GM12878 (cell line): ENCODE measurements at regions of chr7 and their contacts with region 1.

Region 1: GRCh38 chr7:130069978-130070860 is at the start of gene KLHDC10:
- DNase-seq: peak; percentile 97
- ATAC-seq: peak; percentile 97
- H3K4me3 ChIP-seq: peak within 1 kb of the TSS; percentile 99
- H3K27ac ChIP-seq: peak within 1 kb of the TSS; percentile 45; the same call in 1 of the 2 replicates
- H3K4me1 ChIP-seq: no peaks in the 10 kb centered on the region
- H3K27me3 ChIP-seq: no peaks in the 10 kb centered on the region
- CTCF ChIP-seq: no peak
- EP300 ChIP-seq: peak in 1 of 2 experiments; percentile 28; a peak in 1 of 4 replicates
- POLR2A ChIP-seq: peak; percentile 74
- RAD21 ChIP-seq: no peak
- polyA plus RNA-seq, gene KLHDC10: 2.9 to 3.2 TPM

Region 2: DNA sequence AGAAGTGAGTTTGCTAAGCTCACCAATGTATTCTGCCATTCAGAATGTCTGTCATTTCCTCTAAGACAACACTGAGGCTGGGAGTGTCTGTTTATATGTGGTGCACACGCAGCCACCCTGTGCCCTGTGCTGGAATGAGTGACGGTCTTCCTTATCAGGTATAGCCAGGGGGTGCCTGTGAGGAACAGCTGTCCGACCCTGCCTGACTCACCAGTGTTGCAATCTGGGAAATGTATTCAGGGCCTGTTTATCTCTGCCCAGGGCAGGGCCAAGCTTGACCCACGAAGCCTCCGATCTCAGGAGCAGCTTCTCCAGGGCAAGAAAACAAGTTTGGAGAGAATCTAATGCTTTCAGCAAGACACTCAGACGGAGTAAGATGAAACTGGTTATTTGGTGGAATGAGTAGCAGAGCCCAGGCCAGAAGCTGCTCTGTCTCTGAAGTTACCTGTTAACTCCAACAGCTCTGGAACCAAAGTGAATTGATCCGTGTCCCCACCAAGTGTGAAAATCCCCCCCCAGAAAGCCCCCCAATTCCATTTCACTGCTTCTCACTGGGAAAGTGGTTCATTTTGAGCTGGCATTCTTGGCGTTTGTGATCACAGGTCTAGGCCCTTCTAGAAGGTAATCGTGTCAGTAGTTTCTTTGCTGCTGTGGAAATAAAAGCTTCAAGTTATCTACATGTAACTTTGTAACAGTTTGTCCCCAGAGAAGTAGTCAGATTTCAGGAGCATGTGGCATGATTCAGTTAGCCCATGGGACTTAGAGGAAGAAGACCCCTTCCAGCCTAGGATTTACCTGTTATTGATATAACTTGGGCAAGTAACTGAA is 111.4 kb before region 1 on chr7:
- CTCF ChIA-PET with region 1: no interaction called
- POLR2A ChIA-PET with region 1: no interaction called
- RAD21 ChIA-PET with region 1: no interaction called
- SMC1A ChIA-PET with region 1: no interaction called
- in situ Hi-C with region 1: no loop called
- intact Hi-C with region 1: no loop called
- DNase-seq: no peak
- ATAC-seq: peak; percentile 38; the same call in 2 of the 3 replicates
- H3K4me3 ChIP-seq: no peak overlapping the region
- H3K27ac ChIP-seq: no peak overlapping the region
- H3K4me1 ChIP-seq: no peaks in the 10 kb centered on the region
- H3K27me3 ChIP-seq: no peaks in the 10 kb centered on the region
- CTCF ChIP-seq: no peak
- EP300 ChIP-seq: no peak
- POLR2A ChIP-seq: no peak
- RAD21 ChIP-seq: no peak

Region 3: GRCh38 chr7:130021105-130021834 is 48.9 kb before region 1 on chr7:
- CTCF ChIA-PET with region 1: no interaction called
- POLR2A ChIA-PET with region 1: no interaction called
- RAD21 ChIA-PET with region 1: no interaction called
- SMC1A ChIA-PET with region 1: no interaction called
- in situ Hi-C with region 1: no loop called
- intact Hi-C with region 1: no loop called
- DNase-seq: no peak
- ATAC-seq: no peak
- H3K4me3 ChIP-seq: no peak overlapping the region
- H3K27ac ChIP-seq: no peak overlapping the region
- H3K4me1 ChIP-seq: no peaks in the 10 kb centered on the region
- H3K27me3 ChIP-seq: no peaks in the 10 kb centered on the region
- CTCF ChIP-seq: no peak
- EP300 ChIP-seq: no peak
- POLR2A ChIP-seq: no peak
- RAD21 ChIP-seq: no peak

Region 4: GRCh38 chr7:130114374-130115135 is 44.3 kb after region 1 on chr7:
- CTCF ChIA-PET with region 1: interaction called, 6 read pairs
- POLR2A ChIA-PET with region 1: no interaction called
- RAD21 ChIA-PET with region 1: interaction called, 6 read pairs
- SMC1A ChIA-PET with region 1: interaction called, 4 read pairs
- in situ Hi-C with region 1: no loop called
- intact Hi-C with region 1: loop called (anchors 2 kb)
- DNase-seq: no peak
- ATAC-seq: peak; percentile 87
- H3K4me3 ChIP-seq: no peak overlapping the region
- H3K27ac ChIP-seq: peak overlapping the region; percentile 59
- H3K4me1 ChIP-seq: peaks cover 32% of the 10 kb centered on the region
- H3K27me3 ChIP-seq: no peaks in the 10 kb centered on the region
- CTCF ChIP-seq: no peak
- EP300 ChIP-seq: no peak
- POLR2A ChIP-seq: no peak
- RAD21 ChIP-seq: no peak

Region 5: GRCh38 chr7:130197094-130197493 is 126.9 kb after region 1 on chr7:
- CTCF ChIA-PET with region 1: interaction called, 4 read pairs
- POLR2A ChIA-PET with region 1: no interaction called
- RAD21 ChIA-PET with region 1: interaction called, 3 read pairs
- SMC1A ChIA-PET with region 1: no interaction called
- in situ Hi-C with region 1: no loop called
- intact Hi-C with region 1: loop called (anchors 5 kb)
- DNase-seq: no peak
- ATAC-seq: no peak
- H3K4me3 ChIP-seq: no peak overlapping the region
- H3K27ac ChIP-seq: no peak overlapping the region
- H3K4me1 ChIP-seq: no peaks in the 10 kb centered on the region
- H3K27me3 ChIP-seq: no peaks in the 10 kb centered on the region
- CTCF ChIP-seq: no peak
- EP300 ChIP-seq: no peak
- POLR2A ChIP-seq: no peak
- RAD21 ChIP-seq: no peak

Region 6: GRCh38 chr7:130463553-130464434 is 393.6 kb after region 1 on chr7:
- CTCF ChIA-PET with region 1: no interaction called
- POLR2A ChIA-PET with region 1: no interaction called
- RAD21 ChIA-PET with region 1: no interaction called
- SMC1A ChIA-PET with region 1: no interaction called
- in situ Hi-C with region 1: no loop called
- intact Hi-C with region 1: no loop called
- DNase-seq: no peak
- ATAC-seq: no peak
- H3K4me3 ChIP-seq: no peak overlapping the region
- H3K27ac ChIP-seq: no peak overlapping the region
- H3K4me1 ChIP-seq: no peaks in the 10 kb centered on the region
- H3K27me3 ChIP-seq: no peaks in the 10 kb centered on the region; a peak in 1 of 4 replicates
- CTCF ChIP-seq: no peak
- EP300 ChIP-seq: no peak
- POLR2A ChIP-seq: no peak
- RAD21 ChIP-seq: no peak

Region 7: DNA sequence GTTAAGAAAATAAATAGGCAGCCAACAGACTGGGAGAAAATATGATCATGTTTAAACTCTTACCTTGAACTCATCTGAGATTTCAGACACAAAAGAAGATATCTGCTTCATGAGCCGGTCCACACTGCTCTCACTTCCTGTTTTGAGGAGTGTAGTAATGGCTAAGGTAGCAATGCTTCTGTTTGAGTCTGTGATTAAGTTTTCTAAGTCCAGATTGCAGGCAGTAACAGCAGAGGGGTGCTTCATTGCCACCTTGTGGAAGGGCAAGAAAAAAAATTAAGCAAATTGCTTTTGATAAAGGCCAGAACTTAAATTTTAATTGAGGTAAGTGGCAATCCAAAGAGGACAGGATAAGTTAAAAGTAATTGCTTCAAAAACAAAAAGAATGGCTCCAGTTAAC is 490.8 kb after region 1 on chr7:
- CTCF ChIA-PET with region 1: no interaction called
- POLR2A ChIA-PET with region 1: no interaction called
- RAD21 ChIA-PET with region 1: no interaction called
- SMC1A ChIA-PET with region 1: interaction called, 3 read pairs
- in situ Hi-C with region 1: no loop called
- intact Hi-C with region 1: loop called (anchors 1 kb)
- DNase-seq: peak; percentile 40
- ATAC-seq: peak; percentile 100
- H3K4me3 ChIP-seq: no peak overlapping the region
- H3K27ac ChIP-seq: no peak overlapping the region
- H3K4me1 ChIP-seq: no peaks in the 10 kb centered on the region
- H3K27me3 ChIP-seq: no peaks in the 10 kb centered on the region
- CTCF ChIP-seq: peak; percentile 33 to 41 (median 39); a peak in 5 of 6 replicates
- EP300 ChIP-seq: no peak
- POLR2A ChIP-seq: no peak
- RAD21 ChIP-seq: peak; percentile 73

Region 8: GRCh38 chr7:130758429-130759056 is 688.3 kb after region 1 on chr7:
- CTCF ChIA-PET with region 1: interaction called, 57 read pairs
- POLR2A ChIA-PET with region 1: interaction called, 5 read pairs
- RAD21 ChIA-PET with region 1: interaction called, 29 read pairs
- SMC1A ChIA-PET with region 1: interaction called, 33 read pairs
- in situ Hi-C with region 1: loop called (anchors 5 kb)
- intact Hi-C with region 1: loop called (anchors 1 kb)
- DNase-seq: no peak
- ATAC-seq: peak; percentile 63
- H3K4me3 ChIP-seq: no peak overlapping the region
- H3K27ac ChIP-seq: no peak overlapping the region
- H3K4me1 ChIP-seq: no peaks in the 10 kb centered on the region
- H3K27me3 ChIP-seq: no peaks in the 10 kb centered on the region; a peak in 1 of 4 replicates
- CTCF ChIP-seq: peak; percentile 41 to 59 (median 48)
- EP300 ChIP-seq: no peak
- POLR2A ChIP-seq: no peak
- RAD21 ChIP-seq: peak; percentile 92